ENCODE measurements at regions of chr1 and their contacts with region 1.

Region 1: GRCh38 chr1:186985889-186986491 is 157.2 kb downstream of the PLA2G4A start:
- DNase-seq: no peak
- ATAC-seq: peak; percentile 33 to 56
- H3K4me3 ChIP-seq: no peak overlapping the region
- H3K27ac ChIP-seq: no peak overlapping the region
- H3K4me1 ChIP-seq: no peaks in the 10 kb centered on the region
- H3K27me3 ChIP-seq: no peaks in the 10 kb centered on the region
- CTCF ChIP-seq: peak in 4 of 5 experiments; percentile 17 to 50 (median 47)
- POLR2A ChIP-seq: no peak

Region 2: DNA sequence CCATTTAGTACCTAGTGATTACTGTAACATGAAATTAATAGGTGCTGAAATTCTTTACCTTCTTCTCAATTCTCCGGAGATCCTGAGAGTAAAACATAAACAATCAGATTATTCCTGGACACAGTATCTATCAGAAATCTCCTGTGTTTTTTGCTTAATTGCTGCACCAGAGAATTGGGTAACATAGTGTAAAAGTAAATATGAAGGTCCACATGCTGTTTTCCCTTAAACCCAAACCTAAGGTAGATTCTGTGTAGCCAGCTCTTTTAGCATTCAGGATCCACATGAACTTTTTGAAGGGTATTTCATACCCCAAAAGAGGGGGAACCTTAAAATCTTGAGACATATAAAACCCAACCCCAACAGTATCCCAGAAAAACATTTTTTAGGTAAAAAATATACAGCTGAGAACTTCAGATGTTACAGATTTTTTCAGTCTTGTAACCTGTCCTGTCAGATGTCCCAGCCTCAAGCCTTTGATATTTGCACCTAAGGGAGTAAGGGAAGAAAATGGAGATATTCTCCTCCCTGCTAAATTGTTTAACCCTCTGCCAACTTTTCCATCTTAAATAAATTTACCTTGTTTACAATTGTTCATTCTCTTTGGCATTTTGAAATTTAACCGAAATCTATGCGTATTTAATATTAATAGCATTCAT is 599.1 kb before region 1 on chr1:
- in situ Hi-C with region 1: no loop called
- intact Hi-C with region 1: no loop called
- DNase-seq: no peak
- ATAC-seq: no peak
- H3K4me3 ChIP-seq: no peak overlapping the region
- H3K27ac ChIP-seq: no peak overlapping the region
- H3K4me1 ChIP-seq: peaks cover 5 to 11% of the 10 kb centered on the region in 2 donors
- H3K27me3 ChIP-seq: no peaks in the 10 kb centered on the region
- CTCF ChIP-seq: no peak
- POLR2A ChIP-seq: no peak

Region 3: DNA sequence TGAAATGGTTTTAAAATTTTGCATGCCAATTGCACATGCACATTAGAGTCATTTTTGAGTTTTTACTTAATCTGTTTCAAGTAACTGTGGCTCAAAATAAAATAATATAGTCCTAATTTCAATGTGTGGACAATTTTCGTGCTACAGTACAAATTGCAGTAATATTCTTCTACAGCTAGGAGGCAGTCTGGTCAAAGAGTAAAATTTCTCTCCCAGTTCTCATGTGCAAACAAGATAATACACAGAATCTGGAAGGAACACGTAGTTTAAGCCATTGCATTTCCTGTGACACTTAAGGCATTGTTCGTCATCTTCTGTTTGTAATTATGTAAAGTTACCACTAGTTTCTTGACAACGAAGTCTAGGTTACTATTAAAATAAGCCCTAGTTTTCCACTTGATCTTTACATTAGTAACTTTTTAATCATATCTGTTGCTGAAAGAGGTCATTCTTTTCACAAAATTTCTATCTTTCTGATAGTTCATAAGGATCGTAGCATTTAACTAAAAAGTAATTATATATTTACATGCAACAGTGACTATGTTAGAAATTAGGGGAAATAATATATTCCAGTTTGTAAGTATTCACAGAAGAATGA is 581.4 kb before region 1 on chr1:
- in situ Hi-C with region 1: loop called in 1 of 4 experiments (anchors 10 kb)
- intact Hi-C with region 1: no loop called
- DNase-seq: no peak
- ATAC-seq: no peak
- H3K4me3 ChIP-seq: no peak overlapping the region
- H3K27ac ChIP-seq: no peak overlapping the region
- H3K4me1 ChIP-seq: no peaks in the 10 kb centered on the region
- H3K27me3 ChIP-seq: no peaks in the 10 kb centered on the region
- CTCF ChIP-seq: peak in 2 of 5 experiments; percentile 43 to 50
- POLR2A ChIP-seq: no peak

Region 4: DNA sequence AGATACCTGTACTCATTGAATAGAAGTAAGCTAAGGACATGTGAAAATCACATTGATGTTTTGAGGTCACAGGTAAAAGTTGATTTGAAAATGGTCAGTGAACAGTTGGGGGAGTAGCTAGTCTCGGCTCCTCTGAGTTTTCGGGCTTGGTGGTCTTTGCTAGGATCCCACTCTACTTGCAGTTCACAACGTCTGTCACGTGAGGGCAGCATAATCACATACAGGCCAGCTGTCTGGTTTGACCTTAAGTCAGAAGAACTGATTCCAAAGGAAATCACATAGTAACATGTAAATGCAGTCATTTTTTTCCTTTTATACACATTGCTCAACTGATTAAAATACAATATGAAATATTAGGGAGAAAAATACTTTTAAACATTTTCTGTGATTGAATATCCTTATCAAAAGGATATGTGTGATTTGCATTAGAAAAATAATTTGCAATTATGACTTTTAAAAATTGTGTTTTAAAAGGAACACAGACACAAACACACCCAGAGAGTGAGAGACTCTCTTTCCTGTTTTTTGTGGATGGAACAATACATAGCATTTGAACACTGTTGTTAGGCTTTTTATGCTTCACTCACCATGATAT is 503.2 kb before region 1 on chr1:
- in situ Hi-C with region 1: loop called in 3 of 4 experiments (anchors 10 to 25 kb)
- intact Hi-C with region 1: loop called (anchors 5 kb)
- DNase-seq: no peak
- ATAC-seq: peak in 1 of 2 donors; percentile 33
- H3K4me3 ChIP-seq: no peak overlapping the region
- H3K27ac ChIP-seq: no peak overlapping the region
- H3K4me1 ChIP-seq: no peaks in the 10 kb centered on the region
- H3K27me3 ChIP-seq: no peaks in the 10 kb centered on the region
- CTCF ChIP-seq: peak in 4 of 5 experiments; percentile 46 to 64 (median 52)
- POLR2A ChIP-seq: no peak

Region 5: GRCh38 chr1:186605762-186606350 is 380.1 kb before region 1 on chr1:
- in situ Hi-C with region 1: loop called in 2 of 4 experiments (anchors 25 kb)
- intact Hi-C with region 1: loop called (anchors 2 kb)
- DNase-seq: no peak
- ATAC-seq: no peak
- H3K4me3 ChIP-seq: no peak overlapping the region
- H3K27ac ChIP-seq: no peak overlapping the region
- H3K4me1 ChIP-seq: no peaks in the 10 kb centered on the region
- H3K27me3 ChIP-seq: no peaks in the 10 kb centered on the region
- CTCF ChIP-seq: no peak
- POLR2A ChIP-seq: no peak

Region 6: DNA sequence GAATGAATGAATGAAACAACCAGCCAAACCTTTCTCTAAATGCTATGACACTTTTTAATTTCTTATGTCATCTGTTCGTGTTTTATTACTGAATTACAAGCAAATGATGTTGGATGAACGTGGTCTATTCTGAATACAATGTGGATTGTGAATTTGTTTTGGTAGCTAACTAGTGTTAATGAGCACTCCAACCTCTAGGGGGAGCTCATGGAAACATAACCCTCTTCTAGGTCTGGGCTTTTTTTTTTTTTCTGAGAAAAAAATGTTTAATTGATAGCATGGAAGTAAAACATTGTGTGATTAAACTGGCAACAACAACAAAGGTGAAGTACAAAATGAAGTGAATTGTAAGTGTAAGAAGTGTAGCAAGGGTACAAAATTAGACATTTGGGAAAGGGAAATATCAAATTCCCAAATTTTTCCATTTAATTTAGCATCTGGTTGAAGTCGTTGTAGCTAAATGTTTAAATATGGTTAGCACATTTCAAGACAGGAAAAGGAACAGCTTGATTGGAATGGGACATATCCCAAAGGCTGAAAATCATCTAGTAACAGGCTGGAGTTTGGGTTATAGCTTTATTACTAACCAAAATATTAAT is 263.2 kb before region 1 on chr1:
- in situ Hi-C with region 1: loop called in 1 of 4 experiments (anchors 25 kb)
- intact Hi-C with region 1: no loop called
- DNase-seq: no peak
- ATAC-seq: no peak
- H3K4me3 ChIP-seq: no peak overlapping the region
- H3K27ac ChIP-seq: no peak overlapping the region
- H3K4me1 ChIP-seq: no peaks in the 10 kb centered on the region
- H3K27me3 ChIP-seq: no peaks in the 10 kb centered on the region
- CTCF ChIP-seq: no peak
- POLR2A ChIP-seq: no peak

Region 7: DNA sequence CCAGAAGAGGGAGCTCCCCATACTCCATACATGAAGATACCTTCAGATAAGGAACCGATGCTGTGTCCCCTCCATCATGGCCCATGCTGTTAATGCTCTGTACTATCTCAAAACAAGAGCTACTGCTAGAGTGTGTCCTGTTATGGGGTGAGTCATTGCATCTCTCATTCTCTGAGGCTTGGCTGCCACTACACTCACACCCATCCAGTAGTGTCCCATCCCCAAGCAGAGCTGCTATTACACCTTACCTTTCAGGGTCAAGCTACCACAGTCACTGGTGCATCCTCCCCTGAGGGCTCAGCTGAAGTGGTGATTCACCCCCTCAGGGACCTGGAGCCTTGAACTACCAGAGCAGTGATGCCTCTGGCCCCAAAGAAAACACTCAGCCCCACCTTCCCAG is 41.3 kb after region 1 on chr1:
- in situ Hi-C with region 1: no loop called
- intact Hi-C with region 1: no loop called
- DNase-seq: no peak
- ATAC-seq: no peak
- H3K4me3 ChIP-seq: no peak overlapping the region
- H3K27ac ChIP-seq: no peak overlapping the region
- H3K4me1 ChIP-seq: no peaks in the 10 kb centered on the region
- H3K27me3 ChIP-seq: no peaks in the 10 kb centered on the region
- CTCF ChIP-seq: no peak
- POLR2A ChIP-seq: no peak

Region 8: GRCh38 chr1:187038789-187039188 is 52.8 kb after region 1 on chr1:
- in situ Hi-C with region 1: no loop called
- intact Hi-C with region 1: no loop called
- DNase-seq: no peak
- ATAC-seq: no peak
- H3K4me3 ChIP-seq: no peak overlapping the region
- H3K27ac ChIP-seq: no peak overlapping the region
- H3K4me1 ChIP-seq: no peaks in the 10 kb centered on the region
- H3K27me3 ChIP-seq: no peaks in the 10 kb centered on the region
- CTCF ChIP-seq: no peak
- POLR2A ChIP-seq: no peak